Panc1 (cell line): ENCODE measurements at regions of chr3 and their contacts with region 1.

Region 1: DNA sequence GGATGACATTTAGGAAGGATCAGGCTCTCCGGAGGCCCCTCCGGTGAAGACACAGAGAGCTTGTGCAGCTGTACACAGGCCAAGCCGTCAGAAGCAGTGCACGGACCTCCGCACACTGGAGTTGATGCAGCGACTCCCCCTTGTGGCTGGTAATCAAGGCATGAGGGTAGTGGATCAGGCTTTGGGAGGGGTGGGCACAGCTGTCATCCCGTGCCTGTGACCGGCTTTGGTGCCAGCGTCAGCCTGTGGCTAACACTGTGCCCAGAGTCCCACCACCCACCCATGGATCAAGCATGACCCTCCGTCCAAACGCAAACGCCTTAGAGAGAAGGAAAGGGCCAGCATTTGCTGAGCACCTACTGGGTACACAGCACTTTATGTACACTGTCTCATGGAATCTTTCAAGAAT is 8.2 kb upstream of the GRIP2 start:
- DNase-seq: no peak
- ATAC-seq: peak; percentile 88
- H3K4me3 ChIP-seq: no peak overlapping the region
- H3K27ac ChIP-seq: no peak overlapping the region
- H3K4me1 ChIP-seq: peaks cover 4% of the 10 kb centered on the region; the same call in 1 of the 2 replicates
- H3K27me3 ChIP-seq: no peaks in the 10 kb centered on the region
- CTCF ChIP-seq: peak; percentile 86

Region 2: GRCh38 chr3:14508961-14509795 is 39.1 kb before region 1 on chr3:
- CTCF ChIA-PET with region 1: interaction called, 4 read pairs
- POLR2A ChIA-PET with region 1: no interaction called
- in situ Hi-C with region 1: no loop called
- intact Hi-C with region 1: loop called (anchors 2 kb)
- DNase-seq: no peak
- ATAC-seq: peak; percentile 87
- H3K4me3 ChIP-seq: 0 out of 4 replicates have a peak overlapping the region, but pooled peaks of 1 of the 2 experiments have one; percentile 6
- H3K27ac ChIP-seq: no peak overlapping the region
- H3K4me1 ChIP-seq: no peaks in the 10 kb centered on the region
- H3K27me3 ChIP-seq: no peaks in the 10 kb centered on the region
- CTCF ChIP-seq: peak; percentile 90

Region 3: GRCh38 chr3:14520149-14520548 is 28.2 kb before region 1 on chr3:
- CTCF ChIA-PET with region 1: interaction called, 11 read pairs
- POLR2A ChIA-PET with region 1: no interaction called
- in situ Hi-C with region 1: no loop called
- intact Hi-C with region 1: no loop called
- DNase-seq: no peak
- ATAC-seq: no peak
- H3K4me3 ChIP-seq: no peak overlapping the region
- H3K27ac ChIP-seq: no peak overlapping the region
- H3K4me1 ChIP-seq: no peaks in the 10 kb centered on the region
- H3K27me3 ChIP-seq: no peaks in the 10 kb centered on the region
- CTCF ChIP-seq: no peak